A549 (cell line): ENCODE measurements at regions of chr10 and their contacts with region 1.

Region 1: DNA sequence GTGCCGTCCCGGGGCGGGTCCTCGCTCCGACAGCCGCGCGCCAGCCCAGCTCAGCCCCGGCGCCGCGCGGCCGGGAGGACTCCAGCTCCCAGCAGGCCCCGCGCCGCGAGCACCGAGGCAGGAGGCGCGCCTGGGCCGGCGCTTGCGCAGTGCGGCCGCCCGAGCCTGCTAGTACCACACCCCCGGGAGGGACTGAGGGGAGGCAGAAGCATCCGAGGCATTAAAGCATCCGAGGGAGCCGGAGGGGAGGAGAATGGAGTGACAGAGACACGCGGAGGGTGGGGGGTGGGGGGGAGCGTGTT is at the start of gene GRK5:
- DNase-seq: peak; percentile 96
- ATAC-seq: peak; percentile 86 to 91
- H3K4me3 ChIP-seq: peak within 1 kb of the TSS; percentile 66
- H3K27ac ChIP-seq: peak within 1 kb of the TSS; percentile 98 to 99
- H3K4me1 ChIP-seq: peaks cover 33% of the 10 kb centered on the region
- CTCF ChIP-seq: no peak
- EP300 ChIP-seq: no peak
- POLR2A ChIP-seq: peak; percentile 69
- RAD21 ChIP-seq: no peak
- polyA plus RNA-seq, gene GRK5: 5.0 and 5.4 TPM in 2 replicates

Region 2: DNA sequence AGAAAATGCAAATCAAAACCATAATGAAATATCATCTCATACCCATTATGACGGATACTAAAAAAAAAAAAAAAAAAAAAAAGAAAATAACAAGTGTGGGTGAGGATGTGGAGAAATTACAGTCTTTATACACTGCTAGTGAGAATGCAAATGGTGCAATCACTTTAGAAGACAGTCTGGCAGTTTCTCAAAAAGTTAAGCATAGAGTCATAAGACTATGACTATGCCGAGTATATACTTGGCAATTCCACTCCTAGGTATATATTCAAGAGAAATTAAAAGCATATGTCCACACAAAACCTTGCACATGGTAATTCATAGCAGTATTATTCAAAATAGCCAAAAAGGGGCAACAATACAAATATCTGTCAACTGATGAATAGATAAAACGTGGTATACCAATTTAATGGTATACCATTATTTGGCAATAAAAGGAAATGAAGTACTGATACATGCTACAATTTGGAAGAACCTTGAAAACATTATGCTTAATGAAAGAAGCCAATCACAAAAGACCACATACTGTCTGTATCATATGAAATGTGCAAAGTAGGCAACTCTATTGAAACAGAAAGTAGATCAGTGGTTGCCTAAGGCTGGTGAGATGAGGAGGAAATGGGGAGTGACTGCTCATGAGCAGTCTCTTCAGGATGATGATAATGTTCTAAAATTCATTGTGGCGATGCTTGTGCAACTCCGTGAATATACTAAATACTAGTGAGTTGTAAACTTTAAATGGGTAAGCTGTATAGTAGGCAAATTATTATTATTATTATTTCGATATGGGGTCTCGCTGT is 267.9 kb before region 1 on chr10:
- CTCF ChIA-PET with region 1: no interaction called
- POLR2A ChIA-PET with region 1: no interaction called
- DNase-seq: no peak
- ATAC-seq: no peak
- H3K4me3 ChIP-seq: no peak overlapping the region
- H3K27ac ChIP-seq: no peak overlapping the region
- H3K4me1 ChIP-seq: no peaks in the 10 kb centered on the region
- CTCF ChIP-seq: no peak
- EP300 ChIP-seq: no peak
- POLR2A ChIP-seq: no peak
- RAD21 ChIP-seq: no peak

Region 3: GRCh38 chr10:119231654-119232053 is 24.3 kb after region 1 on chr10:
- CTCF ChIA-PET with region 1: interaction called, 186 read pairs
- POLR2A ChIA-PET with region 1: no interaction called
- DNase-seq: no peak
- ATAC-seq: no peak
- H3K4me3 ChIP-seq: no peak overlapping the region
- H3K27ac ChIP-seq: no peak overlapping the region
- H3K4me1 ChIP-seq: peaks cover 21% of the 10 kb centered on the region
- CTCF ChIP-seq: no peak
- EP300 ChIP-seq: no peak
- POLR2A ChIP-seq: no peak
- RAD21 ChIP-seq: no peak

Region 4: DNA sequence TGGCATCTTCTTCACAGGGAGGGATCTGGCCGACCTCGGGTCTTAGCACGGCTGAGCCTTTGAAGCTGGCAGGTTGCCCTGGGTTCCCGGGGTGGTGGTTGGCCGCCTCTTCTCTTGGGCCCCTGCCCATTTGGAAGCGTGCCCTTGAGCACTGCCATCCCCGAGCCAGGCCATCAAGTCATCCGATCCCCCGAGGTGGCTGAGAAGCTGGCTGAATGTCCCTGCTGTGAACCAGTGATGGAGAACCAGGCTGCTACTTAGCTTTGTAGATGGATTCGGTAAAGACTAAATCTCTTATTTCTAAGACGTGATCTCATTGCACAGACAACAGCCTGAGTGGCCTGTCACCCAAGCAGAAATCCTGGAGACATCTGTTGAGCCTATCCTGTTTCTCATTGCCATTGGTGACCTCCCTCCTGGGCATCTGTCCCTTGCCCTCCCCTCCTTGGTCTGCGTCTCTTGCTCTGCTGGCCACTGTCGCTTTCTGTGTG is 74.3 kb after region 1 on chr10:
- CTCF ChIA-PET with region 1: interaction called, 26 read pairs
- POLR2A ChIA-PET with region 1: no interaction called
- DNase-seq: no peak
- ATAC-seq: no peak
- H3K4me3 ChIP-seq: no peak overlapping the region
- H3K27ac ChIP-seq: no peak overlapping the region; a peak in 1 of 6 replicates
- H3K4me1 ChIP-seq: peaks cover 13% of the 10 kb centered on the region; the same call in 2 of the 3 replicates
- CTCF ChIP-seq: no peak
- EP300 ChIP-seq: no peak
- POLR2A ChIP-seq: no peak
- RAD21 ChIP-seq: no peak

Region 5: DNA sequence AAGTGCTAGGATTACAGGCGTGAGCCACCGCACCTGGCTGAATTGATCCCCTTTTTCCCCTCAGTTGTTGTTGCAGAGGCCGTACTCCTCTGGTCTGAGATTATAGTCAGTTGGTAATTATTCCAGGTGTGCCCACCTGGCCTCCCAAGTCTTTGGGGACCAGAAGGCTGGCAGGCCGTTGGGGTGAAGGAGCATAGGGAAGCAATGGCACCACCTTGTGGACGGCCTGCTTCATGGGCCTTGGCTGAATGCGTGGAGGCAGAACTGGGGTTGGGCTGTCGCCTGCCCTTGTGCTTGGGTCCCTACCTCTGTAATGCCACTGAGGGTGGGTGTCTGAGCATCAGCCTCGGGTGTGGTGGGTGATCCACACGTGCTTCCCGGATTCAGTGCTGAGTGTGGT is 209.5 kb after region 1 on chr10:
- CTCF ChIA-PET with region 1: interaction called, 283 read pairs
- POLR2A ChIA-PET with region 1: interaction called, 6 read pairs
- DNase-seq: peak; percentile 62 to 90
- ATAC-seq: peak; percentile 81 to 93
- H3K4me3 ChIP-seq: no peak overlapping the region
- H3K27ac ChIP-seq: peak overlapping the region in 1 of 2 experiments; percentile 53; a peak in 1 of 6 replicates
- H3K4me1 ChIP-seq: no peaks in the 10 kb centered on the region
- CTCF ChIP-seq: peak; percentile 82
- EP300 ChIP-seq: no peak
- POLR2A ChIP-seq: no peak
- RAD21 ChIP-seq: peak; percentile 93 to 95

Region 6: DNA sequence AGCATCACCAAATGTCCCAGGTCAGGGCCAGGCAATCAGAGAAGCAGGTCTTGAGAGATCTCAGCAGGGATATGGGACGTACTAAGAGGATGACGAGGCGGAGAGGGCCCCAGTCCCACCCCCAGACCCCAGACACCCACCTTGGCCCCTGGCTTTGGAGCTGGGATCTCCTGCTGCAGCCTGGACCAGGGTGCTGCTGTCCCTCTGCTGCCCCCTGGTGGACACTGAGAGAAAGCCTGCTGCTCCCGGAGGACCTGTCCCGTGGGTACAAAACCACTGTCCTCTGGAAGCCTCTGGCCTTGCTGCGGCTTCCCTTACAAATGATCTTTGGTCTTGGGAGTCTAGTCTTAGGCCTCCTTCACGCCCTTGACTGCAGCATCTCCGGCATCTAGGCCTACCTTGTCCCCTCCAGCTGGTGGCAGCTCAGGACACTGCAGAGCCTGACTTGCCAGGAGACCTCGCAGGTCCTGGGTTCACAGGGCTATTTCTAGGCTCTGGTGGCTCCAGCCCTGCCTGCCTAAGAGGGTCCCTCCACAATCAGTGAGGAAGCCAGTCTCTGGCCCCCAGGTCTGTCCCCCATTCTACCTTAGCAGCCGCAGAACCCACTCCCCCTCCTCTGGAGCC is 238.1 kb after region 1 on chr10:
- CTCF ChIA-PET with region 1: interaction called, 186 read pairs
- POLR2A ChIA-PET with region 1: interaction called, 9 read pairs
- DNase-seq: peak; percentile 77 to 81
- ATAC-seq: peak; percentile 81 to 94
- H3K4me3 ChIP-seq: no peak overlapping the region
- H3K27ac ChIP-seq: no peak overlapping the region
- H3K4me1 ChIP-seq: peaks cover 8% of the 10 kb centered on the region
- CTCF ChIP-seq: peak; percentile 91
- EP300 ChIP-seq: no peak
- POLR2A ChIP-seq: no peak
- RAD21 ChIP-seq: peak; percentile 88 to 90

Region 7: DNA sequence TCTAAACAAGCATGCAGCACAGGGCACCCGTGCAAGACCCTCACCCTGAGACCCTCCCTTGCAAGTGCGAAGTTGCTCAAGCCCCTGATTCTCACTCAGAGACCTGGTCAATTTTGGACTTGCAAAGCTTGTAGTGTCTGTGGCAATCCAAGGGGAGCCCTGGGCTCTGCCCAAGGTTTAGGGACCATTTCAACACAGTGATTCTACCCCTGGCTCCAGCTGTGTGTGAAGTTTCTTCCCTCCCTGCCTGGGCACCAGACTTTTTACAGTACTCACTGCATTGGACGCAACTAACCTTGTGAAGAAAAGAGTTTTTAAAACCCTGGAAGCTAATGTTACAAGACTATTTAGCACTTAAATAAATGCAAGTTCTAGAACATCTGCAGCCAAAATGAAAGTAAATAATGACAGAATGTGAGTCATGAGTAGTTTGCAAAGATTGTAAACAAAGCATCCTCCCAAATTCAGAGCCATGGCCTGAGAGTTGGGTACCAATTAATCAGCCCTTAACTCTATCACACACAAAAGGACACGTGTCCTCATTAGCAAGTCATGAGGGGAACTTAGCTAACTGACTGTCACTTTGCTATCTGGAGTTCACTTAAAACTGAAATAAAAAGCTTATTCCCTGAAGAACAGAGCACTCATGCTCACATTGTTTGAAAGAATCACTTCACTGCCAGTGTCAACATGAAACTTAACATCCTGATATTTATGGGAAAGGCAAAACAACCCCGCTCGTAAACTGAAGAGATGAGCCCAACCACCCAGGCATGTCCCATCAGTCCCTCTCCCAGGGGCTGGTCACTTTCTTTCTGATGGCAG is 287.1 kb after region 1 on chr10:
- CTCF ChIA-PET with region 1: interaction called, 107 read pairs
- POLR2A ChIA-PET with region 1: no interaction called
- DNase-seq: no peak
- ATAC-seq: no peak
- H3K4me3 ChIP-seq: no peak overlapping the region
- H3K27ac ChIP-seq: no peak overlapping the region
- H3K4me1 ChIP-seq: peaks cover 18% of the 10 kb centered on the region
- CTCF ChIP-seq: no peak
- EP300 ChIP-seq: no peak
- POLR2A ChIP-seq: no peak
- RAD21 ChIP-seq: no peak